Caco-2 (cell line): ENCODE measurements at regions of chr19 and their contacts with region 1.

Region 1: DNA sequence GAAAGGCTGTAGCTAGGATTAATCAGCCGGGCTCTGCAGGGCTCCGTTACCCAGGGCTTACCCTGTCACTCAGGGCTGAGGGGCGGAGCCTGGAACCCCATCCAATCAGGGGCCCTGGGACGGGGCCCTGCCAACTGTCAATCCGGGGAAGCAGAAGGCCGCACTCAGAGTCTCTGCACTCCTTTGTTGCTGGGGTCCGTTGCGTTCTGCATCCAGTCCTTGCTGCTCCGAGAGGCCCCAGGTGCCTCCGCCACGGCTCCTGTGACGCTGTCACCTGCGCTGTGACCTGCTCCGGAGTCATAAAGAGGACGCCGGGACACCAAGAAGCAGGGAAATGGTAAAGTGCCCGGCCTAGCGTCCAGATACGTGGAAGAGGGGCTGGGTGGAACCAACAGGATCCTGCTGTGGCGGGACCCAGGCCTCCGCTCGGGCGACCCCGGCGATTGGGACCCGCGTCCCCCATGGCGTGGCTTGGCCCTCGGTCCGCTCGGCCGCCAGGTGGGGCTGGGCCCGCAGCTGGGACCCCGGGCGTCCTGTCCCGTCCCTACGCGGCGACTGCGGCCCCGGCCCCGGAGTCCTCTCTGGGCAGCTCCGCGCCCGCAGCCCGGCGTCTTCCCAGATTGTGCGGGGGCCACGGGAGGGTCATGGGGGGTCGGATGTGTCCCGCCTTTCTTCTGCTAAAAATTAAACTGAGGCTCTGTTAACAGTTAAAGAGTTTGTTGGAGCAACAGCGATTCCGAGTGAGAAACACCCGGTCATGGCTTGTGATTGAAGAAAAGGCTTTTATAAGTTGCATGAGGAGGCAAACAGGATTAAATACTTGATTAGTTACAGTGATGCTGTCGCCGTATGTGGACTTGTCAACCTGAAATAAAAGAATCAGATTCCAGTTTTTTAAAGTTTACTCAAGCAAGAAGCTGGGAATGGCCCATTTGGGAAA is at the start of gene ZNF491:
- DNase-seq: peak; percentile 87 to 89
- H3K4me3 ChIP-seq: peak within 1 kb of the TSS; percentile 70
- H3K4me3 Mint-ChIP-seq: peak within 1 kb of the TSS; percentile 82
- H3K27ac Mint-ChIP-seq: no peak within 1 kb of the TSS
- H3K4me1 ChIP-seq: peaks cover 8% of the 10 kb centered on the region; the same call in 1 of the 2 replicates
- H3K4me1 Mint-ChIP-seq: peaks cover 10% of the 10 kb centered on the region
- H3K27me3 ChIP-seq: no peaks in the 10 kb centered on the region
- H3K27me3 Mint-ChIP-seq: no peaks in the 10 kb centered on the region
- CTCF ChIP-seq: peak; percentile 41 to 49
- total RNA-seq, gene ZNF491: 0.20 and 0.56 TPM in 2 replicates

Region 2: DNA sequence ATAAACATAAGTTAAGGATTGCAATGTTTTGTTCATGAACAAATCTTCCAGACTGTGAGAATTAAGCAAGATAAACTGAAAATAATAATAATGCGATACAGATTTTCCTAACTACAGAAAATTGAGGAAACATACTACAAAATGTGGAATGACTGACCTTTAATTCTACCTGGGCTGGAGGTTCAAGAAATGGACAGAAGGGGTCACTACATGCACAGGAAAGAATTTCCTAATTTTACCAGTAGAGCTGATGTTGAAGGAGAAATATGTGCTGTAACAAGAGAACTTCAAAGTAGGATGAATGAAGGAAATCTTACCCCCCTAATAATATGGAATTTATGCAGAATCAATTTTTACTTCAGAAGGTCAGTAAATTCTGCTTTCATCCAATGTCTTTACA is 139.0 kb before region 1 on chr19:
- CTCF ChIA-PET with region 1: interaction called, 12 read pairs
- POLR2A ChIA-PET with region 1: no interaction called
- intact Hi-C with region 1: no loop called
- DNase-seq: peak in 1 of 2 experiments; percentile 27
- H3K4me3 ChIP-seq: no peak overlapping the region
- H3K4me3 Mint-ChIP-seq: no peak overlapping the region
- H3K27ac Mint-ChIP-seq: no peak overlapping the region
- H3K4me1 ChIP-seq: no peaks in the 10 kb centered on the region
- H3K4me1 Mint-ChIP-seq: no peaks in the 10 kb centered on the region
- H3K27me3 ChIP-seq: no peaks in the 10 kb centered on the region
- H3K27me3 Mint-ChIP-seq: no peaks in the 10 kb centered on the region
- CTCF ChIP-seq: peak in 1 of 2 experiments; percentile 34

Region 3: DNA sequence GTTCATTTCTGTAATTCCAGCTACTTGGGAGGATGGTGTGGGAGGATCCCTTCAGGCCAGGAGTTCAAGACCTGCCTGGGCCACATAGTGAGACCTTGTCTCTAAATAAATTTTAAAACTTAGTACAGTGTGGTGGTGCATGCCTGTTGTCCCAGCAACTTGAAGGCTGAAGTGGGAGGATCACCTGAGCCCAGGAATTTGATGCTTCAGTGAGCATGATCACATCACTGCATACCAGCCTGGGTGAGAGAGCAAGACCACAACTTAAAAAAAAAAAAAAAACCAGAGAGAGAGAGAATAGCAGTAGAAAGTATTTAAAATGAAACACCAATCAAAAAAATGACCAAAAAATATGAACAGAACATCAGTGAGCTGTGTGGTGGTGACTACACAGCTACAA is 52.8 kb before region 1 on chr19:
- CTCF ChIA-PET with region 1: no interaction called
- POLR2A ChIA-PET with region 1: no interaction called
- intact Hi-C with region 1: no loop called
- DNase-seq: no peak
- H3K4me3 ChIP-seq: no peak overlapping the region
- H3K4me3 Mint-ChIP-seq: no peak overlapping the region
- H3K27ac Mint-ChIP-seq: no peak overlapping the region
- H3K4me1 ChIP-seq: no peaks in the 10 kb centered on the region
- H3K4me1 Mint-ChIP-seq: no peaks in the 10 kb centered on the region
- H3K27me3 ChIP-seq: no peaks in the 10 kb centered on the region
- H3K27me3 Mint-ChIP-seq: no peaks in the 10 kb centered on the region
- CTCF ChIP-seq: no peak

Region 4: DNA sequence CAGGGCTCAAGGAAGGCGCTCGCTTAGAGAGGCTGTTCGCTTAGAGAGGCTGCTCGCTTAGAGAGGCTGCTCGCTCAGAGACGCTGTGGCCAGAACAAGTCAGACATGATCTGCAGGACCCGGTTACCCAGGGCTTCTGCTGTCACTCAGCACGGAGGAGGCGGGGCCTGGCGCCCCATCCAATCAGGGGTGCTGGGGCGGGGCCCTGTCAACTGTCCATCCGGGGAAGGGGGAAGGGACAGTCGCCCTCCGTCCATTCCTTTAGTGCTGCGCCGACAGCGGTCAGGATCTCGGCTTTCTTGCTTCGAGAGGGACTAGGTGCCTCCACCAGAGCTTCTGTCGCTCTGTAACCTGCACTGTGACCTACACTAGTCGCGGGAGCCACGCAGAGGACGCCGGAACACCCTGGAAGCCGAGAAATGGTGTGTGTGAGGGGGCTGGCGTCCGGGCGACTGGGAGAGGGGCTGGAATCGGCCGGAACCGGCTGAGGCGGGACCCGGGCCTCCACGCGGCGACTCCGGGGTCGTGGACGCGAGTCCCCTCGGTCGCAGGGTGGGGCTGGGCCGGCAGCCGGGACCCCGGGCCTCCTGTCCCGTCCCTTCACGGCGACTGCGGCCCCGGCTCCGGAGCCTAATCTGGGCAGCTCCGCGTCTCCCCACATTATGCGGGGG is 15.5 kb after region 1 on chr19 and contains the start of gene ZNF440:
- CTCF ChIA-PET with region 1: interaction called, 14 read pairs
- POLR2A ChIA-PET with region 1: no interaction called
- intact Hi-C with region 1: loop called (anchors 1 kb)
- DNase-seq: peak; percentile 95 to 96
- H3K4me3 ChIP-seq: peak within 1 kb of the TSS; percentile 93
- H3K4me3 Mint-ChIP-seq: peak within 1 kb of the TSS; percentile 86
- H3K27ac Mint-ChIP-seq: peak within 1 kb of the TSS; percentile 90
- H3K4me1 ChIP-seq: peaks cover 5% of the 10 kb centered on the region; the same call in 1 of the 2 replicates
- H3K4me1 Mint-ChIP-seq: peaks cover 6% of the 10 kb centered on the region
- H3K27me3 ChIP-seq: no peaks in the 10 kb centered on the region
- H3K27me3 Mint-ChIP-seq: no peaks in the 10 kb centered on the region
- CTCF ChIP-seq: no peak
- total RNA-seq, gene ZNF440: 12.5 and 13.4 TPM in 2 replicates

Region 5: GRCh38 chr19:11924886-11925650 is 126.4 kb after region 1 on chr19 and contains the start of gene ZNF700:
- CTCF ChIA-PET with region 1: interaction called, 31 read pairs
- POLR2A ChIA-PET with region 1: no interaction called
- intact Hi-C with region 1: loop called (anchors 2 kb)
- DNase-seq: peak; percentile 95 to 97
- H3K4me3 ChIP-seq: peak within 1 kb of the TSS; percentile 84
- H3K4me3 Mint-ChIP-seq: peak within 1 kb of the TSS; percentile 72
- H3K27ac Mint-ChIP-seq: peak within 1 kb of the TSS; percentile 97
- H3K4me1 ChIP-seq: peaks cover 12% of the 10 kb centered on the region
- H3K4me1 Mint-ChIP-seq: peaks cover 15% of the 10 kb centered on the region
- H3K27me3 ChIP-seq: no peaks in the 10 kb centered on the region
- H3K27me3 Mint-ChIP-seq: no peaks in the 10 kb centered on the region
- CTCF ChIP-seq: no peak
- total RNA-seq, gene ZNF700: 8.5 and 9.7 TPM in 2 replicates

Region 6: GRCh38 chr19:12043752-12044422 is 245.2 kb after region 1 on chr19:
- CTCF ChIA-PET with region 1: no interaction called
- POLR2A ChIA-PET with region 1: no interaction called
- intact Hi-C with region 1: no loop called
- DNase-seq: no peak
- H3K4me3 ChIP-seq: no peak overlapping the region
- H3K4me3 Mint-ChIP-seq: no peak overlapping the region
- H3K27ac Mint-ChIP-seq: no peak overlapping the region
- H3K4me1 ChIP-seq: no peaks in the 10 kb centered on the region
- H3K4me1 Mint-ChIP-seq: no peaks in the 10 kb centered on the region
- H3K27me3 ChIP-seq: no peaks in the 10 kb centered on the region
- H3K27me3 Mint-ChIP-seq: no peaks in the 10 kb centered on the region
- CTCF ChIP-seq: no peak

Region 7: GRCh38 chr19:12139885-12140547 is 341.4 kb after region 1 on chr19 and contains the start of gene ZNF20:
- CTCF ChIA-PET with region 1: interaction called, 37 read pairs
- POLR2A ChIA-PET with region 1: no interaction called
- intact Hi-C with region 1: loop called (anchors 1 kb)
- DNase-seq: peak; percentile 95 to 96
- H3K4me3 ChIP-seq: peak within 1 kb of the TSS; percentile 89
- H3K4me3 Mint-ChIP-seq: peak within 1 kb of the TSS; percentile 88
- H3K27ac Mint-ChIP-seq: peak within 1 kb of the TSS; percentile 90
- H3K4me1 ChIP-seq: 0 out of 2 replicates have a peak, but pooled peaks cover 5% of the 10 kb centered on the region
- H3K4me1 Mint-ChIP-seq: peaks cover 16% of the 10 kb centered on the region
- H3K27me3 ChIP-seq: no peaks in the 10 kb centered on the region
- H3K27me3 Mint-ChIP-seq: no peaks in the 10 kb centered on the region
- CTCF ChIP-seq: no peak
- total RNA-seq, gene ZNF20: 5.8 TPM in 2 replicates